CD8-positive, alpha-beta T cell (primary cell): ENCODE measurements at regions of chr11 and their contacts with region 1.

Region 1: DNA sequence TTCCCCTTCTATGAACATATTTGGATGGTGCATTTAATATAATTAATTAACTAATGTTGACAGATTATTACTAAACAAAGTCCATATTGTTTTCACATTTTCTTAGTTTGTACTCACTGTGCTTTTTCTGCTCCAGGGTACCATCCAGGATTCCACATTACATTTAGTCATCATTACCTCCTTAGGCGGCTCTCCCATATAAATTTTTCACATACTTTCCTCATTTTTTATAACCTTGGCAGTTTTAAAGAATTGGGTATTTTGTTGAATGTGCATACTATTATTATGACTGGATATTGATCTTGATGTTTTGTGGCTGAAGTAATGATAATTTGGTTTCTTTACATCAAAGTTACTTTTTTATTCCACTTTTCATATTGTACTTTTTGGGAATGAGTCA is 755.6 kb upstream of the ANO3 start:
- DNase-seq: no peak
- ATAC-seq: no peak
- H3K4me3 ChIP-seq: no peak overlapping the region
- H3K4me3 Mint-ChIP-seq: no peak overlapping the region
- H3K27ac ChIP-seq: no peak overlapping the region
- H3K27ac Mint-ChIP-seq: no peak overlapping the region
- H3K4me1 ChIP-seq: no peaks in the 10 kb centered on the region
- H3K4me1 Mint-ChIP-seq: no peaks in the 10 kb centered on the region
- H3K27me3 ChIP-seq: no peaks in the 10 kb centered on the region
- H3K27me3 Mint-ChIP-seq: no peaks in the 10 kb centered on the region
- CTCF ChIP-seq: no peak

Region 2: DNA sequence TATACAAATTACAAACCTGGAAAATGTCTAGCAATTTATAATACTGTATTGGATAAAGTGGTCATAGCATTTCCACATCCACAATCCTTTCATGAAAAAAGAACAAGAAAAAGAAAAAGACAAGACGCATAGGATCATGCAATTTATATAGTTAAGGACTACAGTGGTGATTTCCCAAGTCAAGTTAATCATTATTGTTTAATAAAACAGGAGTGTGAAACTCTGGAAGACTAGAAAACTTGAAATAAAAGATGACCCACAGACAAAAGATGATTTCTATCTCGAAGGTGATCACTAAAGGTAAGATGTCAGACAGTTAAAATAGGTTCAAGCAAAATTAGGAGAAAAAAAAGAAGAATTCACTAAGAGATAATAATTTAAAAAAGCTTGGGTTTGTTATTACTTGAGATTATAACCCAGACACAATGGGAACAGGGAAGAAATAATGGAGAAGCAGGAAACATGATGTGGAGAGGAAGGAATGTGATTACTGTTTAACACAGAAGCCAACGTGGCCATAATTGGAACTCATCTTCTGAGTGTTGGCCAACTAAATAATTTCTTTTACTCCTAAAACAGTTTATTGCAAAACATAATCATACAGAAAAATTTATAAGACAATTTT is 314.4 kb after region 1 on chr11:
- CTCF ChIA-PET with region 1: no interaction called
- POLR2A ChIA-PET with region 1: no interaction called
- intact Hi-C with region 1: loop called in 1 of 2 experiments (anchors 10 kb)
- DNase-seq: no peak
- ATAC-seq: no peak
- H3K4me3 ChIP-seq: no peak overlapping the region
- H3K4me3 Mint-ChIP-seq: no peak overlapping the region
- H3K27ac ChIP-seq: no peak overlapping the region
- H3K27ac Mint-ChIP-seq: no peak overlapping the region
- H3K4me1 ChIP-seq: no peaks in the 10 kb centered on the region
- H3K4me1 Mint-ChIP-seq: no peaks in the 10 kb centered on the region
- H3K27me3 ChIP-seq: no peaks in the 10 kb centered on the region
- H3K27me3 Mint-ChIP-seq: no peaks in the 10 kb centered on the region
- CTCF ChIP-seq: no peak